Caco-2 (cell line): ENCODE measurements at regions of chr1 and their contacts with region 1.

Region 1: DNA sequence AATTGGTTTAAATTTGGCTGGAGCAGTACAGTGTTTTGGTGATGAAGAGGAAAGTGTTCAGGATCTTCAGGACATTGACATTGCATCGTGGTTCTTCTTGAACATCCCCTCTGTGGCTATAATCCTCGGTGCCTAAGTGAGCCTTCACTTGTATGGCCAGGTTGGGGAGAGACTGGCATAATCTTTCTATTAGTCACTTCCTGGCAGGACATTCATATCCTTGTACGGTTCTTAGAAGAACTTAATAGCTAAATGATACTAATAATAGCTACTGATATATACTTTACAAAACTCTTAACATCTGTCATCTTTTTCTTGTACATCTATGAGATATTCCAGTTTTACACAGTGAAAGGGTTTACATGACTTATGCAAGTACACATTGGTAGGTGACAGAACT is 35.8 kb downstream of the CELF3 start:
- DNase-seq: no peak
- H3K4me3 ChIP-seq: no peak overlapping the region
- H3K4me3 Mint-ChIP-seq: no peak overlapping the region
- H3K27ac Mint-ChIP-seq: no peak overlapping the region
- H3K4me1 ChIP-seq: no peaks in the 10 kb centered on the region
- H3K4me1 Mint-ChIP-seq: no peaks in the 10 kb centered on the region
- H3K27me3 ChIP-seq: no peaks in the 10 kb centered on the region
- H3K27me3 Mint-ChIP-seq: no peaks in the 10 kb centered on the region
- CTCF ChIP-seq: no peak

Region 2: DNA sequence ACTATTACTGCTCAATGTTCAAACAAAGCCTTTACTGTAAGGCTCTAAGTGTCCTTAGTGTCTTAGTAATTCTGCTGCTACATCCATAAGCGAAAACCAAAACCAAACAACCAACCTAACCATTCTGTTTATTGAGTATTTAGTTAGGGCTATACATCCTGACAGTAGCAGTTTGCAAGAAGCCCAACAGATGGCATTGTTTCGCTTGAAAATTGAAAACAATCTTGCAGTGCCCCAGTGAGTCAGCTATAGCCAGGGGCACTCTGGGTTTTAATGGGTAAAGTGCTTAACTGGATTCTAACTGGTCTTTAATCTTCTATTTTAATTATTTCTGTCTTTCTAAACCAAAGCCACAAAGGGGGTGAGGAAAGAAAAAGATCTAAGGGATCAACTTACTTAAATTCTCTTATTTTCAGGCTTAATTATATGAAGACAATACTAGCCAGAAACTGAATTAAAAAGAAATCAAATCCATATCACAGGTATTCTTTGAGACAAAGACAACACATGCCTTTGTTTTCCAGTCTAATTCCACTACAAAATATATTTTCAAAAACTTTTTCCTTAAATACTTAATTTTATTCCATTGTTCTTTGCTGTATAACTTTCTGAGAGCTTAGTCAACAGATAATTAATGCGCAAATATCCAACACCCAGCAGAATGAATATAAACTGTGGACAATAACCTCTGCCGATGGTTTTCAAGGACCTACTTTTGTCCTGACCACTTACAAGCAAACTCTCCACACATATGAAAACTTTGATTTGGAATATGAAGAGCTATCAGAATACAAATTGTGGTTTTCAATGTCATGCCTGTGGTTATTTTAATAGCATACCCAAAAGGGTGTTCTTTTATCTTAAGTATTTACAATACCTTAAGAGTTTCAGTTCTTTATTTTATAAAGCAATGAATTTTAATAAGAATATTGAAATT is 236.7 kb before region 1 on chr1:
- CTCF ChIA-PET with region 1: no interaction called
- POLR2A ChIA-PET with region 1: no interaction called
- intact Hi-C with region 1: loop called (anchors 10 kb)
- DNase-seq: peak; percentile 74 to 80
- H3K4me3 ChIP-seq: no peak overlapping the region
- H3K4me3 Mint-ChIP-seq: no peak overlapping the region
- H3K27ac Mint-ChIP-seq: peak overlapping the region; percentile 70
- H3K4me1 ChIP-seq: peaks cover 5% of the 10 kb centered on the region; the same call in 1 of the 2 replicates
- H3K4me1 Mint-ChIP-seq: peaks cover 6% of the 10 kb centered on the region
- H3K27me3 ChIP-seq: no peaks in the 10 kb centered on the region
- H3K27me3 Mint-ChIP-seq: no peaks in the 10 kb centered on the region
- CTCF ChIP-seq: peak; percentile 75 to 82